ENCODE measurements at regions of chr14 and their contacts with region 1.

Region 1: GRCh38 chr14:68359837-68360552 is 432.9 kb downstream of the ZFP36L1 start:
- DNase-seq: no peak
- ATAC-seq: peak; percentile 47
- H3K4me3 ChIP-seq: no peak overlapping the region
- H3K27ac ChIP-seq: peak overlapping the region; percentile 82
- H3K4me1 ChIP-seq: peaks cover 33% of the 10 kb centered on the region
- H3K27me3 ChIP-seq: no peaks in the 10 kb centered on the region
- CTCF ChIP-seq: no peak
- EP300 ChIP-seq: no peak
- POLR2A ChIP-seq: no peak
- RAD21 ChIP-seq: no peak

Region 2: DNA sequence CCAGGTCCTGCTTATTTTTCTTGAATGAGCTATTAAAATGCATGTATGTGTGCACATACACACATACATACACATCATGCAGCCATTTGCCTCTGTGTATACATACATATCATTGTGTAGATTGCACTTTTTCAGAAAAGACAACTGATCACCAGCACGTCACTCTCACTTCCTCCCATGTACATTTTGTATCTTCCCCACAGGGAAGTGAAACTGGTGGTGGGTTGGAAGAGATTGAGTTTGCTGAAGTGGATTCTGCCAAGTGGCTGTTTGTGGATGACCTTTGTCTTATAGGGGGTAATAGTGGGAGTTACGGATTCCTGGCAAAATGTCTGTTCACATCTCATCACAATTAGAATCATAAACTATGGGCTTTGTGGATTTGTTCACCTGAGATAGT is 91.8 kb before region 1 on chr14:
- CTCF ChIA-PET with region 1: no interaction called
- POLR2A ChIA-PET with region 1: no interaction called
- RAD21 ChIA-PET with region 1: interaction called, 3 read pairs
- SMC1A ChIA-PET with region 1: interaction called, 17 read pairs
- in situ Hi-C with region 1: no loop called
- intact Hi-C with region 1: no loop called
- DNase-seq: peak; percentile 93
- ATAC-seq: peak; percentile 84
- H3K4me3 ChIP-seq: no peak overlapping the region
- H3K27ac ChIP-seq: peak overlapping the region; percentile 84
- H3K4me1 ChIP-seq: peaks cover 73% of the 10 kb centered on the region
- H3K27me3 ChIP-seq: no peaks in the 10 kb centered on the region
- CTCF ChIP-seq: no peak
- EP300 ChIP-seq: peak; percentile 93 to 100; a peak in 3 of 4 replicates
- POLR2A ChIP-seq: no peak
- RAD21 ChIP-seq: peak; percentile 22

Region 3: GRCh38 chr14:68274725-68275124 is 85.3 kb before region 1 on chr14:
- CTCF ChIA-PET with region 1: interaction called, 3 read pairs
- POLR2A ChIA-PET with region 1: interaction called, 5 read pairs
- RAD21 ChIA-PET with region 1: interaction called, 12 read pairs
- SMC1A ChIA-PET with region 1: interaction called, 17 read pairs
- in situ Hi-C with region 1: no loop called
- intact Hi-C with region 1: no loop called
- DNase-seq: no peak
- ATAC-seq: no peak
- H3K4me3 ChIP-seq: no peak overlapping the region
- H3K27ac ChIP-seq: peak overlapping the region; percentile 91
- H3K4me1 ChIP-seq: peaks cover 78% of the 10 kb centered on the region
- H3K27me3 ChIP-seq: no peaks in the 10 kb centered on the region
- CTCF ChIP-seq: peak in 1 of 3 experiments; percentile 22; a peak in 1 of 6 replicates
- EP300 ChIP-seq: no peak
- POLR2A ChIP-seq: no peak
- RAD21 ChIP-seq: 0 out of 2 replicates have a peak, but pooled peaks have one; percentile 21

Region 4: GRCh38 chr14:68328509-68328908 is 31.5 kb before region 1 on chr14:
- CTCF ChIA-PET with region 1: interaction called, 4 read pairs
- POLR2A ChIA-PET with region 1: interaction called, 8 read pairs
- RAD21 ChIA-PET with region 1: interaction called, 10 read pairs
- SMC1A ChIA-PET with region 1: interaction called, 12 read pairs
- in situ Hi-C with region 1: no loop called
- intact Hi-C with region 1: loop called (anchors 5 kb)
- DNase-seq: no peak
- ATAC-seq: peak; percentile 85
- H3K4me3 ChIP-seq: no peak overlapping the region
- H3K27ac ChIP-seq: peak overlapping the region; percentile 64
- H3K4me1 ChIP-seq: peaks cover 36% of the 10 kb centered on the region
- H3K27me3 ChIP-seq: no peaks in the 10 kb centered on the region
- CTCF ChIP-seq: no peak
- EP300 ChIP-seq: peak in 1 of 2 experiments; percentile 44; a peak in 1 of 4 replicates
- POLR2A ChIP-seq: no peak
- RAD21 ChIP-seq: peak; percentile 30; the same call in 1 of the 2 replicates

Region 5: GRCh38 chr14:68335312-68335711 is 24.7 kb before region 1 on chr14:
- CTCF ChIA-PET with region 1: interaction called, 4 read pairs
- POLR2A ChIA-PET with region 1: interaction called, 8 read pairs
- RAD21 ChIA-PET with region 1: interaction called, 5 read pairs
- SMC1A ChIA-PET with region 1: interaction called, 48 read pairs
- in situ Hi-C with region 1: no loop called
- intact Hi-C with region 1: no loop called
- DNase-seq: no peak
- ATAC-seq: peak; percentile 62
- H3K4me3 ChIP-seq: no peak overlapping the region
- H3K27ac ChIP-seq: peak overlapping the region; percentile 58; the same call in 1 of the 2 replicates
- H3K4me1 ChIP-seq: peaks cover 53% of the 10 kb centered on the region
- H3K27me3 ChIP-seq: no peaks in the 10 kb centered on the region
- CTCF ChIP-seq: no peak
- EP300 ChIP-seq: no peak
- POLR2A ChIP-seq: no peak
- RAD21 ChIP-seq: no peak

Region 6: DNA sequence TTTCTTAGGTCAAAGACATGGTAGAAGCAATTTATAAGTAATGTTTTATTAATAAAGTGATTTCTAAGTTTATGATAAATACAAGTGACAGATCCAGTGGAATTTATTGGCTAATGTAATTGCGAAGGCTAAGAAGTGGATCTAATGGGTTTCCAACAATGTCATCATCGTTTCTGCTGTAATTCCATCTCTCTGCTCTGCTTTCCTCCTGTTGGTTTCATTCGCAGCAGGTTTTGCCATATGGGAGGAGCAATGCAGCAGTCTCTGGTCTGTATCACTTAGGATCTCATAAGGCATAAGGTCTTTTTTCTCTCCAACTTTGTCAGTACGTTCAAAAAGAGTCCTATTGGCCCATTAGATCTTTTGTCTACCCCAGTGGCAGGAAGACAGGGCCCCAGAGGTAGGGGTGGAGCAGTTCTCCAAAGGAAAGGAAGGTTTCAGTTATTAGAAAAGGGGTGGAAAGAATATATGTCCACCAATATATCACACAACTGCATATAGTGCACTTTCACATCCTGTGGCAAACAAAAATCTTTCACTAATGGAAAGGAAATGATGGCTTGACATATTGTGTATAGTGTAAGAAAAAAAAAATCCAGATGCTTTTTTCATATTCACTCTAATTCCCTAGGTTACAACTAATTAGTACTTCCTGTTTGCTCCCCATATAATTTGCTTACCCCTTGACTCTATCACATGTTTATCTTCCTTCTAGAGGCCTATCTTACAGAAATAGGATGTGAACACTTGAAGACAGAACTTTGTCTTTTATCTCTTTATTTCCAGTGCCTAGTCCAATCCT is 18.4 kb before region 1 on chr14:
- CTCF ChIA-PET with region 1: interaction called, 6 read pairs
- POLR2A ChIA-PET with region 1: interaction called, 9 read pairs
- RAD21 ChIA-PET with region 1: interaction called, 5 read pairs
- SMC1A ChIA-PET with region 1: interaction called, 81 read pairs
- in situ Hi-C with region 1: no loop called
- intact Hi-C with region 1: no loop called
- DNase-seq: peak; percentile 71
- ATAC-seq: peak; percentile 87
- H3K4me3 ChIP-seq: no peak overlapping the region
- H3K27ac ChIP-seq: peak overlapping the region; percentile 75
- H3K4me1 ChIP-seq: peaks cover 44% of the 10 kb centered on the region
- H3K27me3 ChIP-seq: no peaks in the 10 kb centered on the region
- CTCF ChIP-seq: no peak
- EP300 ChIP-seq: peak; percentile 61 to 76; a peak in 2 of 4 replicates
- POLR2A ChIP-seq: no peak
- RAD21 ChIP-seq: no peak